MCF 10A (cell line): ENCODE measurements at regions of chr1 and their contacts with region 1.

Region 1: GRCh38 chr1:221435504-221435904 is 306.4 kb downstream of the DUSP10 start:
- DNase-seq: peak; percentile 80
- H3K4me3 Mint-ChIP-seq: no peak overlapping the region
- H3K27ac Mint-ChIP-seq: no peak overlapping the region
- H3K4me1 Mint-ChIP-seq: peaks cover 26% of the 10 kb centered on the region
- H3K27me3 Mint-ChIP-seq: no peaks in the 10 kb centered on the region
- CTCF ChIP-seq: peak; percentile 99

Region 2: GRCh38 chr1:220803401-220804201 is 631.9 kb before region 1 on chr1:
- CTCF ChIA-PET with region 1: interaction called, 37 read pairs
- POLR2A ChIA-PET with region 1: interaction called, 3 read pairs
- intact Hi-C with region 1: no loop called
- DNase-seq: peak; percentile 74
- H3K4me3 Mint-ChIP-seq: no peak overlapping the region
- H3K27ac Mint-ChIP-seq: no peak overlapping the region
- H3K4me1 Mint-ChIP-seq: no peaks in the 10 kb centered on the region
- H3K27me3 Mint-ChIP-seq: no peaks in the 10 kb centered on the region
- CTCF ChIP-seq: peak; percentile 97

Region 3: GRCh38 chr1:220879076-220879508 is 556.4 kb before region 1 on chr1 and contains the start of gene HLX:
- CTCF ChIA-PET with region 1: interaction called, 185 read pairs
- POLR2A ChIA-PET with region 1: interaction called, 7 read pairs
- intact Hi-C with region 1: loop called (anchors 1 kb)
- DNase-seq: peak; percentile 81
- H3K4me3 Mint-ChIP-seq: peak within 1 kb of the TSS; percentile 75
- H3K27ac Mint-ChIP-seq: peak within 1 kb of the TSS; percentile 62
- H3K4me1 Mint-ChIP-seq: peaks cover 21% of the 10 kb centered on the region
- H3K27me3 Mint-ChIP-seq: no peaks in the 10 kb centered on the region
- CTCF ChIP-seq: no peak
- total RNA-seq, gene HLX: 2.1 and 2.3 TPM in 2 replicates

Region 4: DNA sequence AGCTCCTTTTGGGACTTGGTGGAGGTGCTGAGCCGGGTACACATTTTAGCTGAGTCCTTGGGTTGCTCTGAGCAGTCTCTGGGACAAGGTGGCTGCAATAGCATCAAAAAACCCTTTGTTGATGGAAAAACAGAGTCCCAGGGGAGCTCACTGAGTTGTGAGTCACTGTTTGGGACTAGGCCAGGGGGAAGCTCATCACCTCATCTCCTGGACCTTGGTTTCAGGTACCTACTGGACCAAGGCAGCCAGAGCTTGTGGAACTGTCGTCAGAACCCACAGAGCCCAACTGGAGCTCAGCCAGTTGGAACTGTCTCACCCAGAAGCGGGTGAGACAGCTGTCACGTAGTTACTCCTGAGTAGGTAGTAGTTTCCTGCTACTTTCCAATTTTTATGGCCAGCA is 409.5 kb before region 1 on chr1:
- CTCF ChIA-PET with region 1: interaction called, 14 read pairs
- POLR2A ChIA-PET with region 1: no interaction called
- intact Hi-C with region 1: no loop called
- DNase-seq: peak; percentile 80
- H3K4me3 Mint-ChIP-seq: no peak overlapping the region
- H3K27ac Mint-ChIP-seq: no peak overlapping the region
- H3K4me1 Mint-ChIP-seq: peaks cover 11% of the 10 kb centered on the region
- H3K27me3 Mint-ChIP-seq: no peaks in the 10 kb centered on the region
- CTCF ChIP-seq: no peak

Region 5: GRCh38 chr1:221263831-221264767 is 171.4 kb before region 1 on chr1:
- CTCF ChIA-PET with region 1: interaction called, 145 read pairs
- POLR2A ChIA-PET with region 1: interaction called, 7 read pairs
- intact Hi-C with region 1: loop called (anchors 1 kb)
- DNase-seq: peak; percentile 93
- H3K4me3 Mint-ChIP-seq: no peak overlapping the region
- H3K27ac Mint-ChIP-seq: peak overlapping the region; percentile 42
- H3K4me1 Mint-ChIP-seq: peaks cover 5% of the 10 kb centered on the region
- H3K27me3 Mint-ChIP-seq: no peaks in the 10 kb centered on the region
- CTCF ChIP-seq: peak; percentile 72

Region 6: DNA sequence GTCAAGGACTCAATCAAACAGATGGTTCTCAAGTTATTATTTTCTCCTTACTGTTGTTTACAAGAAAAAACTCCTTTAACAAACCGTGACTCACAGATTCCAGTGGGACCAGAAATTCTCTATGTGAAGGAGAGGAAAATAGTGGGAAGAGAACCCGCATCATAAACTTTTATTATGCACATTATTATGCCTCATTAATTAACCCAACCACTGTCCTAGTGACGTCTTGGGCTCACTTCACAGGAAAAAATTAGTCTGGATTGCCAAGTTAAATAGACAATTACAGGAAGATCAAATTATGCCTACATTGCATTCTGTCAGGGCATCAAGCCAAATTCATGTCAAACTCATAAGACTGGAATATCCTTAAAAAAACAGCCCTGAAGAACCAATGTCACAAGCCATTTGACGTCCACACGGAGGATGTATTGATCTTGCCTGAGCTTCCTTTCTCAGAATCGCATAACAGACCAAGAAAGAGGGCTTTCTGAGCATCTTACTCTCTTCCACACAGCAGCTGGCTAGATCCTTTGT is 41.4 kb before region 1 on chr1:
- CTCF ChIA-PET with region 1: interaction called, 8 read pairs
- POLR2A ChIA-PET with region 1: interaction called, 11 read pairs
- intact Hi-C with region 1: loop called (anchors 2 kb)
- DNase-seq: peak; percentile 88
- H3K4me3 Mint-ChIP-seq: no peak overlapping the region
- H3K27ac Mint-ChIP-seq: peak overlapping the region; percentile 55
- H3K4me1 Mint-ChIP-seq: peaks cover 50% of the 10 kb centered on the region
- H3K27me3 Mint-ChIP-seq: no peaks in the 10 kb centered on the region
- CTCF ChIP-seq: no peak

Region 7: GRCh38 chr1:221478050-221478949 is 42.8 kb after region 1 on chr1:
- CTCF ChIA-PET with region 1: interaction called, 8 read pairs
- POLR2A ChIA-PET with region 1: interaction called, 3 read pairs
- intact Hi-C with region 1: loop called (anchors 1 kb)
- DNase-seq: peak; percentile 96
- H3K4me3 Mint-ChIP-seq: no peak overlapping the region
- H3K27ac Mint-ChIP-seq: no peak overlapping the region
- H3K4me1 Mint-ChIP-seq: no peaks in the 10 kb centered on the region
- H3K27me3 Mint-ChIP-seq: no peaks in the 10 kb centered on the region
- CTCF ChIP-seq: peak; percentile 99

Region 8: GRCh38 chr1:221689138-221689537 is 253.6 kb after region 1 on chr1:
- CTCF ChIA-PET with region 1: no interaction called
- POLR2A ChIA-PET with region 1: no interaction called
- intact Hi-C with region 1: no loop called
- DNase-seq: no peak
- H3K4me3 Mint-ChIP-seq: no peak overlapping the region
- H3K27ac Mint-ChIP-seq: no peak overlapping the region
- H3K4me1 Mint-ChIP-seq: no peaks in the 10 kb centered on the region
- H3K27me3 Mint-ChIP-seq: no peaks in the 10 kb centered on the region
- CTCF ChIP-seq: no peak

Region 9: DNA sequence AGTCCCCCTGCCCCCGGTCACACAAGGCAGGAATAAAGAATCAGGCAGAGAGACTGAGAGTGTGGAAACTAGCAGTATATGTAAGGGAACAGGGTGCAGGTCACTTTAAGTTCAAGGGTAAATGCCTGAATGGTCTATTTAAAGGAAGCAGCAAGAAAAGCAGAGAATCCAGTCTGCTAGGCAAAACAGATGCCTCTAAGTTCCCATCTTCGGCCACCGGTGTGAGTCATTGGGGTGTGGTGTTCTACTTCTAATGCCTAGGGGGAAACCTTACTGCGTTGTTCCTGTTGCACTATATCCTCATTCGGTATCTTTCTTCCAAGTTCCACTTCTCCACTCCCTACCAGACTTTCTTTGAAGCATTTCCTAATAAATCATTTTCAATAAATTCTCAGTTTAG is 852.5 kb after region 1 on chr1:
- CTCF ChIA-PET with region 1: no interaction called
- POLR2A ChIA-PET with region 1: no interaction called
- intact Hi-C with region 1: no loop called
- DNase-seq: peak; percentile 97
- H3K4me3 Mint-ChIP-seq: peak overlapping the region; percentile 19
- H3K27ac Mint-ChIP-seq: peak overlapping the region; percentile 68
- H3K4me1 Mint-ChIP-seq: peaks cover 35% of the 10 kb centered on the region
- H3K27me3 Mint-ChIP-seq: no peaks in the 10 kb centered on the region
- CTCF ChIP-seq: peak; percentile 15